Heart right ventricle (tissue), 16 donors: ENCODE measurements at regions of chr6 and their contacts with region 1.

Region 1: DNA sequence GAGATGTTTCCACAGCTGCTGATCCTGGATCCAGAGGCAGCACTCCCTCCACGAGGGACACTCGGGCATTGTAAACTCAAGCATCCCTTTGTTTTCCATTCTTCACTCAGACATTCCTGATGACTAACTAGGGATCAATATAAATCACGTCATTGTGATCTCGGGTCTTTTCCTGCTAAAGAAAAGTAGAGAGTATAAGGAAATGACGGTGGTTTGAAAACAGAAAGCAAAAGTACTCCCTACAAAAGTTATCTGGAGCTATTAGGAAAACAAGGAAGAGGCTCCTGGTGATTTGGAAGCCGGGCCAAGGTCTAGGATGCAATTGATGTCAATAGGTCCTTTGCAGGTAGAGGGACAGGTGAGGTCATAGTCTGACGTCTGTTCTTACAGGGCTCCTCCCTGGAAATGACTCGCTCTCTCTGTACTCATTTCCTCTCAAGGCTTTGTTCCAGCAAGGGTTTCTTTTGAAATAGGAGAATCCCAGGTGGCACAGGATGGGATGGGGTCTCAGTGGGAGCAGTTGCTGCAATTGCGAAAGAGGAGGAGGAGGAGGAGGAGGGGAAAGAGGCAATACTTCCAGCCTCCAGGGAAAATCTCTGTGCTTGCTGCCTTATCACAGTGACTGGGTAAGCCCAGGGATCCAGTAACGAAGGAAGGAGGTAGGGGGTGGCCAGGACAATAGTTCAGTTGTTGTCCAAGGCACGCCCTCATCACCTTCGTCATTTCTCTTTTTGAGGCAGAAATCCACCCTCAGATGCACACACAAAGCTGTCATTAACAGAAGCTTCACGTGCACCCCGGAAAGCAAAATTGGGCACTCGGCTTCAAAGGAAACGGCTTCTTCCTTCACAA is 222.9 kb downstream of the LY86 start:
- DNase-seq: peak in 1 of 2 donors; percentile 55
- ATAC-seq: peak; percentile 50 to 87 (median 70)
- H3K4me3 ChIP-seq: peak overlapping the region in 9 of 10 donors; percentile 9 to 50 (median 39)
- H3K27ac ChIP-seq: peak overlapping the region in 9 of 10 donors; percentile 31 to 80 (median 62)
- H3K4me1 ChIP-seq: peaks cover 0 to 44% (median 28%) of the 10 kb centered on the region in 9 donors
- H3K27me3 ChIP-seq: no peaks in the 10 kb centered on the region
- CTCF ChIP-seq: no peak

Region 2: GRCh38 chr6:6758915-6759654 is 52.3 kb before region 1 on chr6:
- intact Hi-C with region 1: loop called in 3 of 10 experiments (anchors 5 to 10 kb)
- DNase-seq: peak in 1 of 2 donors; percentile 87
- ATAC-seq: peak; percentile 84 to 97 (median 91)
- H3K4me3 ChIP-seq: peak overlapping the region in 6 of 10 donors; percentile 11 to 34 (median 16)
- H3K27ac ChIP-seq: peak overlapping the region in 8 of 10 donors; percentile 18 to 82 (median 62)
- H3K4me1 ChIP-seq: peaks cover 0 to 18% (median 14%) of the 10 kb centered on the region in 9 donors
- H3K27me3 ChIP-seq: no peaks in the 10 kb centered on the region
- CTCF ChIP-seq: peak; percentile 33 to 68 (median 62)

Region 3: DNA sequence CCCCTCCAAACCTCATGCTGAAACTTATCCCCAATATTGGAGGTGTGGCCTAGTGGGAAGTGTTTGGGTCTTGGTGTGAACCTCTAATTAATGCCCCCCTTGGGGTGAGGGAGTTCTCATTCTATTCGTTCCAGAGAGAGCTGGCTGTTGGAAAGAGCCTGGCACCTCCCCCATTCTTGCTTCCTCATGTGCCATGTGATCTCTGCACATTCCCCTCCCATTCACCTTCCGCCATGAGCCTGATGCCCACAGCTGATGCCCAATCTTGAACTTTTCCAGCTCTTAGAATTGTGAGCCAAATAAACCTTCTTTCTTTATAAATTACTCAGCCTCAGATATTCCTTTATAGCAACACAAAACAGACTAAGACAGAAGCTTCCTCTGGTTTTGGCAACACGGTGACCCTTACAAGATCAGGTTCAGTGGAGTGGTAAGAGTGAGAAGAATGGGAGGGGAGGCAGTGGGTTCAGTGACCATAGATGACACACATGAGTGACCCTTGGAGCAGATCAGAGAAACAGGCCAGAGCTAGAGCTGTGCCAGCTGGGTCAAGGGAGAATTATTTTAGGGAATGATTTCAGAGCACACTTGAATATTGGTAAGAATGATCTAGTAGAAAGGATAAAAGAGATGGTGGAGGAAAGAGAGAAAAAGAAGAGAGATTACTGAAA is 46.5 kb before region 1 on chr6:
- intact Hi-C with region 1: loop called in 1 of 10 experiments (anchors 5 kb)
- DNase-seq: no peak
- ATAC-seq: peak in 6 of 8 donors; percentile 59 to 85 (median 65)
- H3K4me3 ChIP-seq: no peak overlapping the region
- H3K27ac ChIP-seq: peak overlapping the region in 1 of 10 donors; percentile 3
- H3K4me1 ChIP-seq: peaks cover 0 to 10% (median 0%) of the 10 kb centered on the region in 9 donors
- H3K27me3 ChIP-seq: no peaks in the 10 kb centered on the region
- CTCF ChIP-seq: no peak

Region 4: GRCh38 chr6:7004581-7005297 is 193.4 kb after region 1 on chr6:
- intact Hi-C with region 1: no loop called
- DNase-seq: no peak
- ATAC-seq: no peak
- H3K4me3 ChIP-seq: no peak overlapping the region
- H3K27ac ChIP-seq: no peak overlapping the region
- H3K4me1 ChIP-seq: no peaks in the 10 kb centered on the region
- H3K27me3 ChIP-seq: no peaks in the 10 kb centered on the region
- CTCF ChIP-seq: no peak

Region 5: DNA sequence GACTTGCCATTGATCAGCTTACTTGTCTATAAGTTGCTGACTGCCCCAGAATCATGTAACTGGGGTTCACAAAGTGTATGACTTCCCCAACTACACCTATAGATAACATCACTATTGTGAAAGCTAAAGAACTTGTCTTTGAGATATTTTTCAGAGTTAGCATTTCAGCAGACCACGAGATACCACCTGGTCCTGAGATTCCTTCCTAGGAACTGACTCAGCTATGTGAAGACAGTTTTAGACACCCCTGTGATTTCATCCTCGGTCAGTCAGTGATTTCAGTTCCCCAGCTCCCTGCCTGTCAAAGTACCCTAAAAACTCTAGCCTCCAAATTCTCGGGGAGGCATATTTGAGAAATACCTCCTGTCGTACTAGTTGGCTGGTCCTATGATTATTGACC is 1036.9 kb after region 1 on chr6:
- intact Hi-C with region 1: no loop called
- DNase-seq: no peak
- ATAC-seq: no peak
- H3K4me3 ChIP-seq: no peak overlapping the region
- H3K27ac ChIP-seq: no peak overlapping the region
- H3K4me1 ChIP-seq: peaks cover 0 to 5% (median 0%) of the 10 kb centered on the region in 9 donors
- H3K27me3 ChIP-seq: peaks cover 0 to 4% (median 0%) of the 10 kb centered on the region in 7 donors
- CTCF ChIP-seq: no peak